Activated T-helper 1 cell treated with anti-CD3 and anti-CD28 coated beads, Interleukin-12 subunit alpha, Interleukin-12 subunit beta, Interleukin-2, Interleukin-4 antibody, amounts not matched to agents 30 ng/mL and 10 ng/mL and 1 ng/mL, durations not matched to agents 14 hours and 24 hours and 36 hours (primary cell): ENCODE measurements at regions of chr2 and their contacts with region 1.

Region 1: DNA sequence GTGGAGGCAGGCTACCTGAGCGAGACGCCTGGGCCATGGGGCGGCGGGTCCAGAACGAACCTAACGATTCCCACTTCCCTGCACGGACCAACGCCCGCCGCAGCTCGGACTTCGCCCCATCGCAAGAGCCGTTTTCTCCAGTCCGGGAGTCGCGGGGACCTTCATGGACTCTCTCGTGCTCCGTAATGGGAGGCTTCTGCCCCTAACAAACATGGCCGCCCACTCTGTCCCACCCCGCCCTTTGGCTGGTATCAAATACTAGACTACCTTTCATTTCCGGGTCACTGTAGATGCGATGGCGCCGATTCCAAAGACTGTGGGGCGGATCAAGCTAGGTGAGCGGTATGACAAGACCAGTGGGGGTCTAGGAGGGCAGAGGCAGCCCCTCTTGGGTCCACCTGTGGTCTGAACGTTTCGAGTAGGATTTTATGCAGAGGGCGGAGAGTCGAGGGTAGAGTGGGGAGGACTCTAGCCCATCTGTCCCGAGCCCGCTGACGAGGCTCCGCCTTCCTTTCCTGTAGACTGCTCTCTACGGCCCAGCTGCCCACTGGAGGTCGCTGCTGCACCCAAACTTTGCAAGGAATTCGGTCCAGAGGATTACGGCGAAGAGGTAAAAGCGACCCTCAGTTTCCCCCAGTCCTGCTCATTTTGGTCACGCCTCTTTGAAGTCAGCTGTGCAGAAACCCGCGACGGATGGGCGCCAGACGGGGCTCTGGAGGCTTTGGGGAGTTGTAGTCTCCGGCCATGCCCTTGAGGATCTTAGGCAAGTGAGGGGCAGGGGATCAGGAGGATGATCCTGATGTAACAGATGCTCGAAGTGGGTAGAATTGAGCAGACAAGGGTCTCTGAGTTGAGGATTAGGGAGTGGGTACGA is at the starts of genes CCDC142 and TTC31:
- DNase-seq: peak; percentile 89
- H3K4me3 Mint-ChIP-seq: peak within 1 kb of the TSS; percentile 99
- H3K27ac Mint-ChIP-seq: peak within 1 kb of the TSS; percentile 99
- H3K4me1 Mint-ChIP-seq: peaks cover 35% of the 10 kb centered on the region
- H3K27me3 Mint-ChIP-seq: no peaks in the 10 kb centered on the region
- total RNA-seq, gene CCDC142: 30.4 and 36.3 TPM in 2 replicates
- total RNA-seq, gene TTC31: 30.2 and 32.2 TPM in 2 replicates

Region 2: DNA sequence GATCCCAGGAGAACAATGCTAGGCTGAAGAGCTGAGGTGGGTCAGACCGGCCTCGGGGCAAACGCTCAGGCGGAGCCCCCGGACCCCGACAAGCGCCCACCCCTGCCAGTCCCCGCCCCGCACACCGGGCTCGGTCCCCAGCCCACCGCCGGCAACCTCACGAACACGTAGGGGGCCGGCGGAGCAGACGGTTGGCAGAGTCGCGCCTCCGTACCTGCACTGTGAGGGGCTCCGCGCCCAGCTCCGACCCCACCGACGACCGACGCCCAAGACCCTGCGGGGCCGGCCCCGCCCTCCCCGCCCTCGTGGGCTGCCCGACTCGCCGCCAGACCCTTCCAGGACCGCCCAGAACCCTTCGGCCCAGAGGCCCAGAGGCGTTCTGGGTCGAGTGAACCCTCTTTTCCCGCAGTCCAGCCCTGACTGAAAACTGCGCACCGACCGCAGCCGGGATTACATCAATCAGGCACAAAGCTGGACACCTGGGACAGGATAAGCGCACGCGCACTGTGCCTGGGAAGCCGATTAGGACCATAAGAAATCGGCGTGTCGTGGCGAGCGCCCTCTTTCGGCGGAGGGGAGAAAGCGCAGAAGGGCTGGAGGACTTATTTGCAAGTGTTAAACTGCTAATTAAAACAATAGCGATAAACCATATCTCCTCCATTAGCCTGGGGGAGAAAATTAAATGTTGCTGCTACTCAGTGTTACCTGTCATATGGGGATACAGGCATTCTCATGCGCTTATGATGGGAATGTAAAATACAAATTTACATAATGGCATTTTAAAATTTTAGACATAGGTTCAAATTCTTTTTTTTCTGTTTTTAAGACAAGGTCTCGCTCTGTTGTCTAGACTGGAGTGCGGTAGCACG is 91.2 kb before region 1 on chr2:
- intact Hi-C with region 1: loop called (anchors 1 kb)
- DNase-seq: peak; percentile 88
- H3K4me3 Mint-ChIP-seq: peak overlapping the region; percentile 43
- H3K27ac Mint-ChIP-seq: peak overlapping the region; percentile 98
- H3K4me1 Mint-ChIP-seq: no peaks in the 10 kb centered on the region
- H3K27me3 Mint-ChIP-seq: peaks cover 10% of the 10 kb centered on the region

Region 3: GRCh38 chr2:74472086-74472944 is 10.7 kb before region 1 on chr2 and contains the start of gene MRPL53:
- intact Hi-C with region 1: loop called (anchors 1 kb)
- DNase-seq: peak; percentile 95
- H3K4me3 Mint-ChIP-seq: peak within 1 kb of the TSS; percentile 99
- H3K27ac Mint-ChIP-seq: peak within 1 kb of the TSS; percentile 94
- H3K4me1 Mint-ChIP-seq: peaks cover 21% of the 10 kb centered on the region
- H3K27me3 Mint-ChIP-seq: peaks cover 2% of the 10 kb centered on the region
- total RNA-seq, gene MRPL53: 118 and 124 TPM in 2 replicates

Region 4: GRCh38 chr2:74507145-74507925 is 24.3 kb after region 1 on chr2 and contains the start of gene PCGF1:
- intact Hi-C with region 1: loop called (anchors 1 kb)
- DNase-seq: peak; percentile 96
- H3K4me3 Mint-ChIP-seq: peak within 1 kb of the TSS; percentile 96
- H3K27ac Mint-ChIP-seq: peak within 1 kb of the TSS; percentile 99
- H3K4me1 Mint-ChIP-seq: peaks cover 55% of the 10 kb centered on the region
- H3K27me3 Mint-ChIP-seq: peaks cover 24% of the 10 kb centered on the region
- total RNA-seq, gene PCGF1: 41.9 and 45.0 TPM in 2 replicates

Region 5: GRCh38 chr2:74587664-74588277 is 104.7 kb after region 1 on chr2:
- intact Hi-C with region 1: loop called (anchors 1 kb)
- DNase-seq: peak; percentile 56
- H3K4me3 Mint-ChIP-seq: no peak overlapping the region
- H3K27ac Mint-ChIP-seq: peak overlapping the region; percentile 12
- H3K4me1 Mint-ChIP-seq: peaks cover 37% of the 10 kb centered on the region
- H3K27me3 Mint-ChIP-seq: peaks cover 17% of the 10 kb centered on the region